Activated CD8-positive, alpha-beta T cell treated with anti-CD3 and anti-CD28 coated beads for 36 hours (primary cell): ENCODE measurements at regions of chr4 and their contacts with region 1.

Region 1: GRCh38 chr4:165131247-165131832 is 18.7 kb upstream of the TMEM192 start:
- DNase-seq: peak; percentile 87
- ATAC-seq: peak; percentile 92
- H3K4me3 Mint-ChIP-seq: no peak overlapping the region
- H3K27ac Mint-ChIP-seq: no peak overlapping the region
- H3K4me1 Mint-ChIP-seq: peaks cover 5% of the 10 kb centered on the region
- H3K27me3 Mint-ChIP-seq: peaks cover 6% of the 10 kb centered on the region
- CTCF ChIP-seq: peak; percentile 92

Region 2: DNA sequence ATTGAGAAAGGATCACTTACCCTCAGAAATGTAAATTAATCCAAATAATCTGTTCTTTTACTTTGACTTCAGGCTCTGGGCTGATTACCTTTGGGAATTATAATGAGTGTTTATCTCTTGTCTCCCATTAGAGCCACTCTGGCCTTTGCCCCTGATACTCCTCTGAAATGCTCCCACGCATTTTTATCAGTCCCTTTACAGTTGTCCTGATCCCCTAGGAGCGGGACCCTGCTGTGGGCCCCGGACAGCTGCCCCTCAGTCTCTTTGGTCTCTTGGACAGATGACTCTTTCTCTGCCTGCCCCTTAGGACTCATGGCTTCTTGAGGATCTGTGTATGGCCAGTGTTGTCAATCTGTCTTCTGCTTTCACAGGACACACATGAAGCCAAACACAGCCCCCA is 78.7 kb before region 1 on chr4:
- CTCF ChIA-PET with region 1: no interaction called
- POLR2A ChIA-PET with region 1: no interaction called
- intact Hi-C with region 1: no loop called
- DNase-seq: no peak
- ATAC-seq: no peak
- H3K4me3 Mint-ChIP-seq: no peak overlapping the region
- H3K27ac Mint-ChIP-seq: no peak overlapping the region
- H3K4me1 Mint-ChIP-seq: no peaks in the 10 kb centered on the region
- H3K27me3 Mint-ChIP-seq: no peaks in the 10 kb centered on the region
- CTCF ChIP-seq: no peak

Region 3: DNA sequence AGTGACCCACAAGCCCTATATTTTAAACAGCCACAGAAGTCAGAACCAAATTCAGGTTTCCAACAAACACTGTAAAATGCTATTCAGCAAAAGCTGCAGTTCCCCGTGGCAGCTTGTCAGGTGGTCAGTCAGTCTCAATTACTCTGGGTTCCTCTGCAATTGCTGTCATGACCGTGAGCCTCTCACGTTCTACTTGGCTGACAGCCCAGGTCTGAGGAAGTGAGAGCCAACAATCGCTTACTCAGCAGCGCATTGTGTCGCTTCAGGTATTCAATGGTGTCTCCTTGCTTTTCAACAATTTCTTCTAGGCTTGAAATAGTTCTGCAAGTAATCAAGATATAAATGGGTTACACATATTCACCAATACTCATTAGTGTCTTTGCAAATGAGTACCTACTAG is 51.9 kb before region 1 on chr4:
- CTCF ChIA-PET with region 1: no interaction called
- POLR2A ChIA-PET with region 1: no interaction called
- intact Hi-C with region 1: no loop called
- DNase-seq: no peak
- ATAC-seq: no peak
- H3K4me3 Mint-ChIP-seq: no peak overlapping the region
- H3K27ac Mint-ChIP-seq: no peak overlapping the region
- H3K4me1 Mint-ChIP-seq: no peaks in the 10 kb centered on the region
- H3K27me3 Mint-ChIP-seq: no peaks in the 10 kb centered on the region
- CTCF ChIP-seq: no peak

Region 4: DNA sequence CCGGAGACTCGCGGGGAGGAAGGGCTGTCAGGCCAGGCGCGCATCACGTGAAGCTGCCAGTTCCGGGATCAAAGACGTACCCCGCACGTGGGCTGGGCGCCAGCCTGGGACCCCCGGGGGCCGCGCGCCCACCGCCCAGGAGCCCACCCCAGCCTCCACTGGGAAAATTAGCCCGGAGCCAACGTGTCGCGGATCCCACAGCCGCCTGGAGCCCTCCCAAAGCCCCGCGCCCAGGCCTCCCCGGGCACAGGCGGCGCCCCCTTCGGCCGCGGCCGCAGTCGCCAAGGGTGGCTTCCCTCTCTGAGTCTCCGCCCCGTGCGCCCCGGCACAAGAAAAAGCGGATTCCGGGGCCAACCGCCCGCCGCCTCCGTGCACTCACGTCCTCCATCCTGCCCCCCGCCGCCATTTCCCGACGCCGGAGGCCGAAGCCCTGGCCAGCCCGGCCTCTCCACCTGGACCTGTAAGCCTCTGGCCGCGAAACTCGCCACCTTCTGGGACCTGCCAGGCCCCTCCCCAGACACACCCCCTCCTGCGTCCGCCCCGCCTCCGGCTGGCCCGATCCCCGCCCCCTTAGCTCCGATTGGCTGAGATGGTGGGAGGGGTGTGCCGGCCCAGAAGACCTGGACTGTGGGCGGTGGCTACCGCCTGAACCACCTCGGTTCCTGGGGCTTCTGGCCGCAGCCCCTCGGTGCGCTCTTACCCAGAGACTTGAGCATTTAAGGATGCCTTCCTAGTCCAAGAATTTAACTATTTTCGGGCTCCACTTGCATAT is 18.8 kb before region 1 on chr4 and contains the start of gene TMEM192:
- CTCF ChIA-PET with region 1: interaction called, 31 read pairs
- POLR2A ChIA-PET with region 1: no interaction called
- intact Hi-C with region 1: no loop called
- DNase-seq: peak; percentile 92
- ATAC-seq: peak; percentile 99
- H3K4me3 Mint-ChIP-seq: peak within 1 kb of the TSS; percentile 86
- H3K27ac Mint-ChIP-seq: peak within 1 kb of the TSS; percentile 94
- H3K4me1 Mint-ChIP-seq: peaks cover 15% of the 10 kb centered on the region
- H3K27me3 Mint-ChIP-seq: no peaks in the 10 kb centered on the region
- CTCF ChIP-seq: no peak
- total RNA-seq, gene TMEM192: 7.9 to 10.6 TPM

Region 5: GRCh38 chr4:165177725-165178666 is 46.7 kb after region 1 on chr4:
- CTCF ChIA-PET with region 1: interaction called, 10 read pairs
- POLR2A ChIA-PET with region 1: no interaction called
- intact Hi-C with region 1: no loop called
- DNase-seq: no peak
- ATAC-seq: no peak
- H3K4me3 Mint-ChIP-seq: no peak overlapping the region
- H3K27ac Mint-ChIP-seq: no peak overlapping the region
- H3K4me1 Mint-ChIP-seq: no peaks in the 10 kb centered on the region
- H3K27me3 Mint-ChIP-seq: no peaks in the 10 kb centered on the region
- CTCF ChIP-seq: no peak

Region 6: GRCh38 chr4:165207431-165208220 is 76.3 kb after region 1 on chr4 and contains the start of gene KLHL2:
- CTCF ChIA-PET with region 1: interaction called, 12 read pairs
- POLR2A ChIA-PET with region 1: interaction called, 3 read pairs
- intact Hi-C with region 1: loop called (anchors 5 kb)
- DNase-seq: peak; percentile 68
- ATAC-seq: peak; percentile 58
- H3K4me3 Mint-ChIP-seq: peak within 1 kb of the TSS; percentile 85
- H3K27ac Mint-ChIP-seq: peak within 1 kb of the TSS; percentile 86
- H3K4me1 Mint-ChIP-seq: peaks cover 68% of the 10 kb centered on the region
- H3K27me3 Mint-ChIP-seq: no peaks in the 10 kb centered on the region
- CTCF ChIP-seq: no peak
- total RNA-seq, gene KLHL2: 24.5 to 29.4 TPM

Region 7: DNA sequence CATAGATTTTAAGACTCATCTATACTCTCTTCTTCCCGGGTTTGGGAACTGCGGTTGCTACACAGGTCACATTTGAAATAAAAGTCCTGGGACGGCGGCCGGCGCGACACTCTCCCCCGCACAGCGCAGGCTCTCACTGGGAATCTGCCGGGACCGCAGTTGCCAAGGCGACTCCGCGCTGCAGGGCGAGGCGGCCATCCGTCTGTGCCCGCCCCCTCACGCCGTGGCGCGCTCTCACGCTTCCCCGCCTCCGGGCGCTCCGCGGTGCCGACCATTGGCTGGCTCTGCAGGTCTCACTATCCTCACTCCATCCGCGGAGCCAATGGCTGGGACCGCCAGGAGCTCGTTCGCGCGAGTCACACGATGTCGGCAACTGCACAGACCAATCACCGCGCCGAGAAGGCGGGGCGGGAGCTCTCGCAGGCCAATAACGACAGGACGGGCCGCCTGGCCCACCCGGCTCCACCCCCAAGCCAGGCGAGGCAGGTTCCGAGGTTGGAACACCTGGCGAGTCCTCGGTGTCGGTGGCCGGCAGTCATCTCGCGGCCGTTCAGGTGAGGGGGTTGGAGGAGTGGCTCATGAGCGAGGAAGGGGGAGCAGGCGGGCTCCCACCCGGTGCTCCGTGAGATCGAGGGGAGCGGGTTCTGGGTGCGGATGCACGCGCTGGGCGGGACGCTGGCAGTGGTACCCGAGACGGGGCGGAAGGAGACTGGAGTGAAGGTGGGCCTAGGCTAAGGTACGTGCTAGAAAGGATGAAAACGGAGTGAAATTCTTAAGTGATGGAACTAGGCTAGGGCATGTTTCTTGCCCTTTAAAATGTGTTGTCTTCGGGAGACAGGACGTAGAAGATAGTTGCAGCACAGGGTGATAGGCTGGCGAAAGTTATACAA is 196.1 kb after region 1 on chr4 and contains the start of gene MSMO1:
- CTCF ChIA-PET with region 1: interaction called, 12 read pairs
- POLR2A ChIA-PET with region 1: no interaction called
- intact Hi-C with region 1: no loop called
- DNase-seq: peak; percentile 99
- ATAC-seq: peak; percentile 98
- H3K4me3 Mint-ChIP-seq: no peak within 1 kb of the TSS
- H3K27ac Mint-ChIP-seq: peak within 1 kb of the TSS; percentile 13
- H3K4me1 Mint-ChIP-seq: peaks cover 40% of the 10 kb centered on the region
- H3K27me3 Mint-ChIP-seq: no peaks in the 10 kb centered on the region
- CTCF ChIP-seq: no peak
- total RNA-seq, gene MSMO1: 42.3 to 43.2 TPM

Region 8: GRCh38 chr4:165355900-165356300 is 224.6 kb after region 1 on chr4:
- CTCF ChIA-PET with region 1: interaction called, 18 read pairs
- POLR2A ChIA-PET with region 1: no interaction called
- intact Hi-C with region 1: no loop called
- DNase-seq: peak; percentile 51
- ATAC-seq: peak; percentile 49
- H3K4me3 Mint-ChIP-seq: no peak overlapping the region
- H3K27ac Mint-ChIP-seq: no peak overlapping the region
- H3K4me1 Mint-ChIP-seq: no peaks in the 10 kb centered on the region
- H3K27me3 Mint-ChIP-seq: peaks cover 17% of the 10 kb centered on the region
- CTCF ChIP-seq: peak; percentile 29

Region 9: DNA sequence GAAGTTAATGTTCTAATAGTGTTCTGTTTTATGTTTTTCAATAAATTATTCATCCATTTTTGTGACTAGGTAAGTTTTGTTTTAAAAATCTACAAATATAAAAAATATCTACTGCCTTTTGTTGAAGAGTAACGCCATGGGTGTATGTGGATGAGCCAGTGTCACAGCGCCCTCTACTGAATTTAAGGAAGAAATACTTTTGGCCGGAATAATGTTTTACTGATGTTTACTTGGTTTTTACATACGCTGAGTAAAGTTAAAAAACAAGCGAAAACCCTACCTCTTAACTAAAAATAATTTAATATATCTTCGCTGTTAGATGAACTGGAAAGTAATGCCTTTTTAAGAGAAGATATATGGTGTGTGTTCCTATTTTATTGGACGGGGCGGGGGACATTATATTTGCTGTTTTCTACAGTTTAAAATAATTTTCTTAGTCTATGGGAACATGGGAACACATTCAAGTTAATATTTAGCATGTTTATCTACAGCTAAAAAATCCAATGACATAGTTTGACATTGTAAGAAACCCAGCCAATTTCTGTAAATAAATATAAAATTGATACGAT is 333.6 kb after region 1 on chr4:
- CTCF ChIA-PET with region 1: interaction called, 36 read pairs
- POLR2A ChIA-PET with region 1: no interaction called
- intact Hi-C with region 1: loop called (anchors 1 kb)
- DNase-seq: peak; percentile 34
- ATAC-seq: peak; percentile 58
- H3K4me3 Mint-ChIP-seq: no peak overlapping the region
- H3K27ac Mint-ChIP-seq: no peak overlapping the region
- H3K4me1 Mint-ChIP-seq: no peaks in the 10 kb centered on the region
- H3K27me3 Mint-ChIP-seq: peaks cover 3% of the 10 kb centered on the region
- CTCF ChIP-seq: peak; percentile 83